A549 (cell line): ENCODE measurements at regions of chr15 and their contacts with region 1.

Region 1: GRCh38 chr15:64153480-64154367 is 2.2 kb downstream of the SNX22 start:
- DNase-seq: peak; percentile 90 to 98
- ATAC-seq: peak; percentile 65 to 88
- H3K4me3 ChIP-seq: no peak overlapping the region
- H3K27ac ChIP-seq: peak overlapping the region in 1 of 2 experiments; percentile 63; a peak in 3 of 6 replicates
- H3K4me1 ChIP-seq: peaks cover 9% of the 10 kb centered on the region; the same call in 1 of the 3 replicates
- CTCF ChIP-seq: peak; percentile 97
- EP300 ChIP-seq: no peak
- POLR2A ChIP-seq: peak; percentile 38; the same call in 1 of the 2 replicates
- RAD21 ChIP-seq: peak; percentile 81 to 87

Region 2: DNA sequence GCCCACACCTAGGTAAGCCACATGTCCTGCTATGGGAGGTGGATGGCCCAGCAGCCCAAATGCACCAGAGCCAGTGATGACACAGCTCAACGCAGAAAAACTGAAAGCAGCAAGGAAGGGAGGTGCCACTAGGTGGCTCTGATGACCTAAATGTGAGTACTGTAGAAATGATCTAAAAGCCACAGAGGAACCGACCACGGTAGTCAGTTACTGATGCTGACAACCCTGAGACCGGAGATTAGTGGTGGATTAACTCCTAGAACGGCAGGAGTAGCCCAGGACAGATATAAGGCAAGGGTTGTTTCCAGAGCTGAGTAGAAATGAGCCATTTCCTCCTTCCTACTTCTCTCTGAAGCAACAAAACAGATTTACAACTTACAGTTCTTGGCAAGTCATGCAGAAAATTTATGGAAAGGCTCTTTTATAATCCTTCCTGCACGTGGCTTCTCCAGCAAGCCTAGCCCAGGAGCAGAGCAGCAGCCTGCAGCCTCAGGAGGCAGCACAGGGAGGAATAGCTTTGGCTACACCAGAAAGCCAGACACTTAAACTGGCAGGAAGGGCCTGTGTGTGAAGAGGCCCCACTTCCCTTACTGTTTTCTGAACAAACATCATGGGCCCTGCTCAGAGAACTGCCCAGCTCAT is 543.4 kb before region 1 on chr15:
- CTCF ChIA-PET with region 1: interaction called, 29 read pairs
- POLR2A ChIA-PET with region 1: no interaction called
- DNase-seq: peak; percentile 85 to 93
- ATAC-seq: peak; percentile 92 to 96
- H3K4me3 ChIP-seq: no peak overlapping the region
- H3K27ac ChIP-seq: peak overlapping the region; percentile 18 to 21; a peak in 3 of 6 replicates
- H3K4me1 ChIP-seq: peaks cover 17% of the 10 kb centered on the region
- CTCF ChIP-seq: peak; percentile 96
- EP300 ChIP-seq: no peak
- POLR2A ChIP-seq: no peak
- RAD21 ChIP-seq: peak; percentile 94 to 95

Region 3: GRCh38 chr15:64112904-64113303 is 40.8 kb before region 1 on chr15:
- CTCF ChIA-PET with region 1: interaction called, 21 read pairs
- POLR2A ChIA-PET with region 1: no interaction called
- DNase-seq: no peak
- ATAC-seq: no peak
- H3K4me3 ChIP-seq: no peak overlapping the region
- H3K27ac ChIP-seq: no peak overlapping the region
- H3K4me1 ChIP-seq: peaks cover 4% of the 10 kb centered on the region; the same call in 1 of the 3 replicates
- CTCF ChIP-seq: no peak
- EP300 ChIP-seq: no peak
- POLR2A ChIP-seq: no peak
- RAD21 ChIP-seq: no peak

Region 4: DNA sequence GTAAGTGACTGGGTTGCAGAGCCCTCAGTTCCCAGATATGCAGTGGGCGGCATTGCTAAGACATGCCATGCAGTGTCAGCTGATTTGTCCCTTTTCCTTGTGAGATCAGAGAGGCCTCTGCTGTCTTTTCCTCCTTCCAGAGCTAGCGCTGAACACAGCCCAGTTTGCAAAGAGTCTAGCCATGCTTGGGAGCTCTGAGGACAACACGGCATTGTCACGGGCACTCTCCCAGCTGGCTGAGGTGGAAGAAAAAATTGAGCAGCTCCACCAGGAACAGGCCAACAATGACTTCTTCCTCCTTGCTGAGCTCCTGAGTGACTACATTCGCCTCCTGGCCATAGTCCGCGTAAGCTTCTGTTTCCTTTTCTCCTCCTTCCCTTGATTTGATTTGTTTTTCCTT is 22.2 kb before region 1 on chr15:
- CTCF ChIA-PET with region 1: interaction called, 27 read pairs
- POLR2A ChIA-PET with region 1: no interaction called
- DNase-seq: no peak
- ATAC-seq: no peak
- H3K4me3 ChIP-seq: no peak overlapping the region
- H3K27ac ChIP-seq: no peak overlapping the region
- H3K4me1 ChIP-seq: no peaks in the 10 kb centered on the region
- CTCF ChIP-seq: no peak
- EP300 ChIP-seq: no peak
- POLR2A ChIP-seq: no peak
- RAD21 ChIP-seq: no peak

Region 5: DNA sequence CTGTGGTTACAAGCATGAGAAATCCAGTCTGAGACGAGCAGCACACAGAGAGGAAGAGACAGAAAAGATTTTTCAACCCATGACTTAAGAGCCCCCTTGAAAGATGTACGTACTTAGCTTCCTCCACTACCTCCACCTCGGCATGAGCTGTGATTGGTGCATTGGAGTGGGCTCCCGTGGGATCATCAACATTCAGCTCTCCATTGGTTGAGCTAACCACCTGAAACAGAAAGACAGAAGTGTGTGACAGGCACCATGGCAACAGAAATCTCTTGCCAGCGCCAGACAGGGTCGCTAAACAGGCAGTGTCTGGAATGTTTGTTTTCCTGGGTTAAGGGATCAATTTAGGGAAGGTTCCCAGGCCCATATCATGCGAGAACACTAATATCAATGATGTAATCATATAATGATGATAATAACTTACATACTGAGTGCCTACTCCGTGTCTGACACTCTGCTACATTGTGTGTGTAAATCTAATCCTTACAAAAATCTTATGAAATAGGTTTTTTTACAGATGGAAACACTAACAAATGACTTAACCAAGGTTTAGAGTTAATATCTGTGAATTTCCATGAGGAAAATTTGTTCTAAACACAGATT is 26.6 kb after region 1 on chr15:
- CTCF ChIA-PET with region 1: interaction called, 15 read pairs
- POLR2A ChIA-PET with region 1: no interaction called
- DNase-seq: no peak
- ATAC-seq: no peak
- H3K4me3 ChIP-seq: no peak overlapping the region
- H3K27ac ChIP-seq: no peak overlapping the region
- H3K4me1 ChIP-seq: no peaks in the 10 kb centered on the region
- CTCF ChIP-seq: no peak
- EP300 ChIP-seq: no peak
- POLR2A ChIP-seq: no peak
- RAD21 ChIP-seq: no peak

Region 6: DNA sequence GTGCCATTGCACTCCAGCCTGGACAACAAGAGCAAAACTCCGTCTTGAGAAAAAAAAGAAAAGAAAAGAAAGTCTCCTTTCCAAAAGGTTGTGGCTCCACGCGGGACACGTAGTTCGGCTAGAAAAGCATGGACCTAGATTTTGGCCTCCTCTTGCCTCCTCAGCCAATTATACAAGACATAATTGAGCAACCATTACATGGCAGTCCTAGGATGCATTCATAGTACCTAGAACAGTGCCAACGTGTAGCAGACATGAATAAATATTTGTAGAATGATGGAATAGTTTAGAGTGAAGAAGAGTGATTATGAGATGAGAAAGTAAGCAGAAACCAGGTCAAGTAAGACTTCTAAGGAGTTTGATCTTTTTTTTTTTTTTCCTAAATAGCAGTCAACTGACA is 419.1 kb after region 1 on chr15:
- CTCF ChIA-PET with region 1: no interaction called
- POLR2A ChIA-PET with region 1: no interaction called
- DNase-seq: no peak
- ATAC-seq: no peak
- H3K4me3 ChIP-seq: no peak overlapping the region
- H3K27ac ChIP-seq: no peak overlapping the region
- H3K4me1 ChIP-seq: peaks cover 26% of the 10 kb centered on the region
- CTCF ChIP-seq: no peak
- EP300 ChIP-seq: no peak
- POLR2A ChIP-seq: no peak
- RAD21 ChIP-seq: no peak